ENCODE measurements at regions of chr12 and their contacts with region 1.

Region 1: GRCh38 chr12:19893514-19893913 is 454.2 kb downstream of the AEBP2 start:
- DNase-seq: peak; percentile 36
- ATAC-seq: no peak
- H3K4me3 ChIP-seq: no peak overlapping the region
- H3K27ac ChIP-seq: no peak overlapping the region
- H3K4me1 ChIP-seq: no peaks in the 10 kb centered on the region
- H3K27me3 ChIP-seq: 0 out of 2 replicates have a peak, but pooled peaks cover 7% of the 10 kb centered on the region
- CTCF ChIP-seq: peak; percentile 43

Region 2: GRCh38 chr12:19757317-19757877 is 136.1 kb before region 1 on chr12:
- CTCF ChIA-PET with region 1: no interaction called
- POLR2A ChIA-PET with region 1: no interaction called
- intact Hi-C with region 1: loop called (anchors 1 kb)
- DNase-seq: peak; percentile 49
- ATAC-seq: no peak
- H3K4me3 ChIP-seq: no peak overlapping the region
- H3K27ac ChIP-seq: no peak overlapping the region
- H3K4me1 ChIP-seq: peaks cover 9% of the 10 kb centered on the region
- H3K27me3 ChIP-seq: no peaks in the 10 kb centered on the region
- CTCF ChIP-seq: peak; percentile 71